Activated CD8-positive, alpha-beta T cell treated with anti-CD3 and anti-CD28 coated beads for 36 hours (primary cell): ENCODE measurements at regions of chr3 and their contacts with region 1.

Region 1: GRCh38 chr3:172595641-172596393 is 72.6 kb upstream of the TNFSF10 start:
- DNase-seq: peak; percentile 53
- ATAC-seq: peak; percentile 26
- H3K4me3 Mint-ChIP-seq: peak overlapping the region; percentile 73
- H3K27ac Mint-ChIP-seq: peak overlapping the region; percentile 86
- H3K4me1 Mint-ChIP-seq: peaks cover 53% of the 10 kb centered on the region
- H3K27me3 Mint-ChIP-seq: peaks cover 5% of the 10 kb centered on the region
- CTCF ChIP-seq: peak; percentile 96

Region 2: GRCh38 chr3:172461530-172462138 is 134.2 kb before region 1 on chr3:
- CTCF ChIA-PET with region 1: interaction called, 37 read pairs
- POLR2A ChIA-PET with region 1: interaction called, 3 read pairs
- intact Hi-C with region 1: no loop called
- DNase-seq: no peak
- ATAC-seq: peak; percentile 88
- H3K4me3 Mint-ChIP-seq: no peak overlapping the region
- H3K27ac Mint-ChIP-seq: no peak overlapping the region
- H3K4me1 Mint-ChIP-seq: no peaks in the 10 kb centered on the region
- H3K27me3 Mint-ChIP-seq: peaks cover 1% of the 10 kb centered on the region
- CTCF ChIP-seq: peak; percentile 98

Region 3: DNA sequence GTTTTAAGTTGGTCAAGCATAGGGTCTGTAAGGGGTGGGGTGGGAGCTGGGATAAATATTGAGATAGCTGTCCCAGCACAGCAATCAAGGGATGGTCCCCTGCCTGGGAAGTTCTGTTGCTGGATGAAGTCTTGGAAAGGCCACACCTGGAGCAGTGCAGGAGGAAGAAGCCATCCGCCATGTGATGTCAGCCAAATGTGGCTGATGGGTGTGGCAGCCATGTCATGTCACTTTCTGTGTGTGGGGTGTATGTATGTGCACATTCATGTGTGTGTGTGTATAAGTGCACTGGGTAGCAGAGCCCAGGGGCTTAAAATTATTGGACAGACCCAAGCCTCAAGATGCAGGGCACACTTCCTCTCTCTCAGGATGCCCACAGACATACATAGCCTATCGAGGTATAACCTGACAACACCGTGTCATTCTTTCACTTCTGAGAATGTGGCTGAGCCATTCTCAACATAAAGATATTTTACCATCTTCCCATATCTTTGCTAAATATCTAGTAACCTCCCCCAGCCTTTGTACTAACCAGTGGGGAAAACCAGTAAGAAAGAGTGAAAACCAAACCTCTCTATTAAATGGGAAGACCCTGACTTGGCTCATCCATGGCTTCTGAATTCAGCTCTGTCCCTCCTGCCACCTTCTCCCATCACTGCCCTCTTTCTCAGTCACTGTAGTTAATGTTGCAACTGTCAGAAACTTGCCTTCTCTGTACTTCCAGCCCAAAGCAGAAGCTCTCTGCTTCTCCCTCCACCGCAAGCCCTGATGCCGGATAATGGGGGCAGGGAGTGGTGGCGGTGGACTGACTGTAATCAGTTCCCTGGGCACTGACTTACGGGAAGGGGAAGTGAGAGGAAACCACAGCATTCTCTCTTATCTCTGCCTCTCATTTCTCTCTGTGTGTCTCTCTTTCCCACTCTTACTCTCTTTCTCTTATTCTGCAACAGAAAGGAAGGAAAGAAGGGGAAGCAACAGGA is 83.7 kb before region 1 on chr3:
- CTCF ChIA-PET with region 1: interaction called, 78 read pairs
- POLR2A ChIA-PET with region 1: interaction called, 26 read pairs
- intact Hi-C with region 1: loop called (anchors 1 kb)
- DNase-seq: peak; percentile 75
- ATAC-seq: peak; percentile 72
- H3K4me3 Mint-ChIP-seq: peak overlapping the region; percentile 55
- H3K27ac Mint-ChIP-seq: peak overlapping the region; percentile 87
- H3K4me1 Mint-ChIP-seq: peaks cover 57% of the 10 kb centered on the region
- H3K27me3 Mint-ChIP-seq: no peaks in the 10 kb centered on the region
- CTCF ChIP-seq: no peak

Region 4: GRCh38 chr3:172530566-172530965 is 65.3 kb before region 1 on chr3:
- CTCF ChIA-PET with region 1: interaction called, 39 read pairs
- POLR2A ChIA-PET with region 1: interaction called, 5 read pairs
- intact Hi-C with region 1: no loop called
- DNase-seq: peak; percentile 40
- ATAC-seq: peak; percentile 75
- H3K4me3 Mint-ChIP-seq: peak overlapping the region; percentile 11
- H3K27ac Mint-ChIP-seq: peak overlapping the region; percentile 77
- H3K4me1 Mint-ChIP-seq: peaks cover 16% of the 10 kb centered on the region
- H3K27me3 Mint-ChIP-seq: no peaks in the 10 kb centered on the region
- CTCF ChIP-seq: no peak

Region 5: GRCh38 chr3:172562871-172563863 is 32.6 kb before region 1 on chr3:
- CTCF ChIA-PET with region 1: interaction called, 23 read pairs
- POLR2A ChIA-PET with region 1: interaction called, 7 read pairs
- intact Hi-C with region 1: loop called (anchors 2 kb)
- DNase-seq: peak; percentile 63
- ATAC-seq: peak; percentile 78
- H3K4me3 Mint-ChIP-seq: peak overlapping the region; percentile 40
- H3K27ac Mint-ChIP-seq: peak overlapping the region; percentile 83
- H3K4me1 Mint-ChIP-seq: peaks cover 32% of the 10 kb centered on the region
- H3K27me3 Mint-ChIP-seq: no peaks in the 10 kb centered on the region
- CTCF ChIP-seq: no peak

Region 6: GRCh38 chr3:172607305-172608121 is 11.7 kb after region 1 on chr3:
- CTCF ChIA-PET with region 1: interaction called, 57 read pairs
- POLR2A ChIA-PET with region 1: interaction called, 4 read pairs
- intact Hi-C with region 1: no loop called
- DNase-seq: no peak
- ATAC-seq: peak; percentile 27
- H3K4me3 Mint-ChIP-seq: no peak overlapping the region
- H3K27ac Mint-ChIP-seq: no peak overlapping the region
- H3K4me1 Mint-ChIP-seq: peaks cover 7% of the 10 kb centered on the region
- H3K27me3 Mint-ChIP-seq: peaks cover 4% of the 10 kb centered on the region
- CTCF ChIP-seq: no peak

Region 7: GRCh38 chr3:172666873-172667694 is 71.3 kb after region 1 on chr3:
- CTCF ChIA-PET with region 1: interaction called, 39 read pairs
- POLR2A ChIA-PET with region 1: interaction called, 5 read pairs
- intact Hi-C with region 1: no loop called
- DNase-seq: peak; percentile 87
- ATAC-seq: peak; percentile 94
- H3K4me3 Mint-ChIP-seq: no peak overlapping the region
- H3K27ac Mint-ChIP-seq: no peak overlapping the region
- H3K4me1 Mint-ChIP-seq: peaks cover 14% of the 10 kb centered on the region
- H3K27me3 Mint-ChIP-seq: no peaks in the 10 kb centered on the region
- CTCF ChIP-seq: peak; percentile 69